ENCODE measurements at regions of chr16 and their contacts with region 1.

Region 1: GRCh38 chr16:78684040-78684611 is 584.7 kb downstream of the WWOX start:
- DNase-seq: peak; percentile 96
- H3K4me3 Mint-ChIP-seq: peak overlapping the region; percentile 53
- H3K27ac Mint-ChIP-seq: peak overlapping the region; percentile 80
- H3K4me1 Mint-ChIP-seq: peaks cover 38% of the 10 kb centered on the region
- H3K27me3 Mint-ChIP-seq: no peaks in the 10 kb centered on the region
- CTCF ChIP-seq: no peak

Region 2: GRCh38 chr16:78513838-78514237 is 170.3 kb before region 1 on chr16:
- CTCF ChIA-PET with region 1: no interaction called
- POLR2A ChIA-PET with region 1: interaction called, 4 read pairs
- intact Hi-C with region 1: loop called (anchors 10 kb)
- DNase-seq: peak; percentile 87
- H3K4me3 Mint-ChIP-seq: no peak overlapping the region
- H3K27ac Mint-ChIP-seq: no peak overlapping the region
- H3K4me1 Mint-ChIP-seq: peaks cover 5% of the 10 kb centered on the region
- H3K27me3 Mint-ChIP-seq: no peaks in the 10 kb centered on the region
- CTCF ChIP-seq: no peak

Region 3: DNA sequence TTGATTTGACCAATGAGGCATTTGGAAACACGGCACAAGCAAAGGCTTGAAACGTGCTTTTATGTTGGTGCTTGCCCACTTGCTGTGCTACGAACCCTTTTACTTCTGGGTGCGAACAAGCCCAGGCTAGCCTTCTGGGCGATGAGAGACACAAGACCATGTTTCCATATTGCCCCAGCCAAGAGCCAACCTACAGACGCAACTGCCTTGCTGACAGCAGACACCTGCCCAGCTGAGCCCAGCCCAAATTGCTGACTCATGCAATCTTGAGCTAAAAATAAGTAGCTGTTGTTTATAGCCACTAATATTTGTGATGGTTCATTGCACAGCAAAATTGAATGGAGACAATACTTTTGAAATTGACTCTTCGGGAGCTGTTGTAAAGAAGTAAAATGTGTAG is 120.2 kb before region 1 on chr16:
- CTCF ChIA-PET with region 1: no interaction called
- POLR2A ChIA-PET with region 1: interaction called, 10 read pairs
- intact Hi-C with region 1: no loop called
- DNase-seq: peak; percentile 57
- H3K4me3 Mint-ChIP-seq: no peak overlapping the region
- H3K27ac Mint-ChIP-seq: peak overlapping the region; percentile 49
- H3K4me1 Mint-ChIP-seq: peaks cover 16% of the 10 kb centered on the region
- H3K27me3 Mint-ChIP-seq: no peaks in the 10 kb centered on the region
- CTCF ChIP-seq: no peak